ENCODE measurements at regions of chr15 and their contacts with region 1.

Region 1: DNA sequence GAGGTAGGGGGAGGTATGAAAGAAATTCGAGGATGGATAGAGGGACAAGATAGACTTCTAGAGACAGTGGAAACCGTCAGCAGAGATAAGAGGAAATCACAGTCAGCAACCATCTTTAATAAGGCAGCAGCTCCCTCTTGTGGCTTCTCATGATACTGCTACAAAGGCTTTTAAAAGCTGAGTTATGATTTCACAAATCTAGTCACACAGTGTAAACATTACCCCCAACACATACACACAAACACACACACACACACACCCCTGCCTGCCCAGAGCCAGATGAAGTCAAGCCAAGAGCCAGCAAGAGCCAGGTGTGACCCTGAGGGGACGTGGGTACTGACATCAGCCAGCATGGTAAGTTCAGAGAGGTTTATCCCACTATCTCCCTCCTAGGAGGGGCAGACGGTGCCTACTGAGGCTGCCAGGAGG is 18.9 kb upstream of the TGM5 start:
- DNase-seq: peak in 1 of 2 donors; percentile 40
- ATAC-seq: peak; percentile 46 to 83 (median 58)
- H3K4me3 ChIP-seq: no peak overlapping the region
- H3K27ac ChIP-seq: no peak overlapping the region
- H3K4me1 ChIP-seq: peaks cover 0 to 4% (median 0%) of the 10 kb centered on the region in 9 donors
- H3K27me3 ChIP-seq: peaks cover 0 to 12% (median 0%) of the 10 kb centered on the region in 7 donors
- CTCF ChIP-seq: peak; percentile 58 to 86 (median 78)

Region 2: GRCh38 chr15:43185157-43186017 is 100.2 kb before region 1 on chr15 and contains the start of gene CCNDBP1:
- intact Hi-C with region 1: loop called in 1 of 10 experiments (anchors 2 kb)
- DNase-seq: peak; percentile 94 to 98
- ATAC-seq: peak; percentile 96 to 99 (median 98)
- H3K4me3 ChIP-seq: peak within 1 kb of the TSS; percentile 61 to 85 (median 76)
- H3K27ac ChIP-seq: peak within 1 kb of the TSS; percentile 74 to 94 (median 88)
- H3K4me1 ChIP-seq: peaks cover 0 to 53% (median 46%) of the 10 kb centered on the region in 9 donors
- H3K27me3 ChIP-seq: no peaks in the 10 kb centered on the region
- CTCF ChIP-seq: peak in 7 of 9 donors; percentile 25 to 55 (median 45)
- total RNA-seq, gene CCNDBP1: 43.7 to 65.1 (median 59.9) TPM

Region 3: DNA sequence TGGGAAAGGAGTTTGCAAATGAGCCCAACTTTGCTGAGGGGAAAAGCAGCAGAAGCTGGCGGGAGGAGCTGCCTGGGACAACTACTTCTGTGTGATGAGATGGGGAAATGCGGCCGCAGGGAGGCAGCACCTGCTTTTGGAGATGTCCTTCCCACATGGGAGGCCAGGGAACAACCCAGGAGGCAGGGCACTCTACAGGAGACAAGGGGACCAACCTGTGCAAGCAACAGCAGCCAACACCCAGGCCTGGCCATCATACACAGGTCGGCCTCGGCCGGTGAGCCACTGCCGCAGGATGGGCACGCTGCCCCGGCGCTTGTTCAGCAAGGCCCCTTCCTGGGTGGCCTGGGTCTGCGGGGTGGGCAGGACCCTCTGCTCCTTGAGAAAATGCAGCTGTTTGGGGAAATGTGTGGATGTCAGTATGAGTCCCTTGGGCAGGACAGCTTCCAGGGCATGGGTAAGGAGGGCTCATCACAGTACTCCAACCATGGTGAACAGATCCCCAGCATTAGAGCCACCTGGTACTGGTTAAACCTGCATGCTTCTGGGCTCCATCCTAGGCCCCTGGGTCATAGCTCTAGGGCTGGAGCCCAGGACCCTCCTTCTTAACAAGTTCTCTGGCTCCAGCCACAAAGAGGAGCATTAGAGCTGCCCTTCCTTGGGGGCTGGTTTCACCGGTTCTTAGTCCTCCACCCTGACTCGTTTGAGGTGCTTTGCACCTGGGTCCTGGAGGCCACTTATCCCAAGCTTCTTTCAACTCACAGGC is 76.4 kb before region 1 on chr15:
- intact Hi-C with region 1: loop called in 1 of 10 experiments (anchors 5 kb)
- DNase-seq: no peak
- ATAC-seq: peak in 3 of 8 donors; percentile 7 to 60 (median 34)
- H3K4me3 ChIP-seq: no peak overlapping the region
- H3K27ac ChIP-seq: no peak overlapping the region
- H3K4me1 ChIP-seq: peaks cover 0 to 4% (median 2%) of the 10 kb centered on the region in 9 donors
- H3K27me3 ChIP-seq: peaks cover 0 to 26% (median 7%) of the 10 kb centered on the region in 7 donors
- CTCF ChIP-seq: peak in 4 of 9 donors; percentile 8 to 27 (median 14)

Region 4: GRCh38 chr15:43225201-43225949 is 60.2 kb before region 1 on chr15:
- intact Hi-C with region 1: loop called in 9 of 10 experiments (anchors 1 to 5 kb)
- DNase-seq: peak in 1 of 2 donors; percentile 35
- ATAC-seq: peak; percentile 63 to 83 (median 78)
- H3K4me3 ChIP-seq: no peak overlapping the region
- H3K27ac ChIP-seq: no peak overlapping the region
- H3K4me1 ChIP-seq: peaks cover 0 to 7% (median 0%) of the 10 kb centered on the region in 9 donors
- H3K27me3 ChIP-seq: peaks cover 0 to 3% (median 0%) of the 10 kb centered on the region in 7 donors
- CTCF ChIP-seq: peak; percentile 40 to 80 (median 74)

Region 5: GRCh38 chr15:43230640-43231115 is 54.9 kb before region 1 on chr15:
- intact Hi-C with region 1: loop called in 9 of 10 experiments (anchors 1 to 5 kb)
- DNase-seq: no peak
- ATAC-seq: peak in 1 of 8 donors; percentile 34
- H3K4me3 ChIP-seq: no peak overlapping the region
- H3K27ac ChIP-seq: no peak overlapping the region
- H3K4me1 ChIP-seq: peaks cover 0 to 7% (median 0%) of the 10 kb centered on the region in 9 donors
- H3K27me3 ChIP-seq: no peaks in the 10 kb centered on the region
- CTCF ChIP-seq: no peak

Region 6: DNA sequence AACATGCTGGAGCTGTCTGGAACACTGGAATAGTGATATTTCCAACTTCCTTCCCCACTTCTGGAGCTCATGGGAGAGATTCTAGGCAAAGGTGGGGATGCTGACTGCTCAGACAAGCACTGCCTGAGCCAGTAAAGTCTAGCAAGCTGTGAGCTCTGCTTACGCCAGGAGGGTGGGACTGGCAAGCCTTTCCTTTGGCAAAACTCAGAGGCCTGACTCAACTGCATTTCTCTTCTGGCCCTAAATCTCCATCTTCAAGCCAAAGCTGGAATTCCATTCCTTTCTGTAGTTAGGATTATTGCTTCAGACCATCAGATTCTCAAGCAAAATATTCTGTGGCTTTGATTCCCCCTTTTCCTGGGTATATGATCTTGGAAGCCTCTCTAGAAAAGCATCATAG is 44.5 kb before region 1 on chr15:
- intact Hi-C with region 1: no loop called
- DNase-seq: no peak
- ATAC-seq: peak in 7 of 8 donors; percentile 40 to 92 (median 71)
- H3K4me3 ChIP-seq: no peak overlapping the region
- H3K27ac ChIP-seq: no peak overlapping the region
- H3K4me1 ChIP-seq: no peaks in the 10 kb centered on the region
- H3K27me3 ChIP-seq: peaks cover 0 to 5% (median 0%) of the 10 kb centered on the region in 7 donors
- CTCF ChIP-seq: no peak

Region 7: GRCh38 chr15:43346305-43346704 is 60.7 kb after region 1 on chr15:
- intact Hi-C with region 1: no loop called
- DNase-seq: no peak
- ATAC-seq: no peak
- H3K4me3 ChIP-seq: no peak overlapping the region
- H3K27ac ChIP-seq: no peak overlapping the region
- H3K4me1 ChIP-seq: no peaks in the 10 kb centered on the region
- H3K27me3 ChIP-seq: no peaks in the 10 kb centered on the region
- CTCF ChIP-seq: no peak